Aorta (tissue), 5 donors: ENCODE measurements at regions of chr12 and their contacts with region 1.

Region 1: DNA sequence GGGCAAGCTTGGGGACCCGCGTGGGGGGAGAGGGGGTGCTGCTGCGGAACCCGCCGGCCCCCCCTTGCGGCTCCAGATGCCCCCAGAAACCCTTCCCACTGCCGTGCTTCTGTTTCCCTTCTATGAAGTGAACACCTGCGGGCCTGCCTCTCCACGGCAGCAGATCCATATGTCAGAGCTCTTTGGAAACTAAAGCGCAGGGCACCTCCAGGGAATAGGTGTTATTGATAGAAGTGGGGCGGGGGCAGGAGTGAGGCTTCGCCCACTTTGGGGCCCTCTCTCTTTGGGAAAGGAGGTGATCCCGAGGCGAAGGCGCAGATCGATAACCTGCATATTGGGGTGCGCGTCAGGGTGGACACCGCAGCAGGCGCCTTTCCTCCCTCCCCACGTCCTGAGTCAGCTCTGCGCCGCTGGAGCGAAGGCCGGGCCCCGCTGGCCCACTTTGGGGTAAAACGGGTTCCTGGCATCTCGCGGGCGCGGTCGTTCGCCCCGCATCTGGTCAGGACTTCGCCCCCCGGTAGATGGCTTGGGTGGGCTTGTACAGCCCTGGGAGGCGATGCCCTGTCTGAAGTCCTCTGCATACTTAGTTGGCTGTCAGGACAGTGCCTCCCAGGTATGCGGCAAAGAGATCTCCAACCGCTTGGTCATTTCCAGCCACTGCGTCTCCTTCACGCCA is 524 bp downstream of the KMT5A start:
- DNase-seq: no peak
- ATAC-seq: no peak
- H3K4me3 ChIP-seq: peak overlapping the region; percentile 66
- H3K27ac ChIP-seq: peak overlapping the region in 1 of 2 donors; percentile 34
- H3K4me1 ChIP-seq: no peaks in the 10 kb centered on the region
- H3K27me3 ChIP-seq: no peaks in the 10 kb centered on the region

Region 2: DNA sequence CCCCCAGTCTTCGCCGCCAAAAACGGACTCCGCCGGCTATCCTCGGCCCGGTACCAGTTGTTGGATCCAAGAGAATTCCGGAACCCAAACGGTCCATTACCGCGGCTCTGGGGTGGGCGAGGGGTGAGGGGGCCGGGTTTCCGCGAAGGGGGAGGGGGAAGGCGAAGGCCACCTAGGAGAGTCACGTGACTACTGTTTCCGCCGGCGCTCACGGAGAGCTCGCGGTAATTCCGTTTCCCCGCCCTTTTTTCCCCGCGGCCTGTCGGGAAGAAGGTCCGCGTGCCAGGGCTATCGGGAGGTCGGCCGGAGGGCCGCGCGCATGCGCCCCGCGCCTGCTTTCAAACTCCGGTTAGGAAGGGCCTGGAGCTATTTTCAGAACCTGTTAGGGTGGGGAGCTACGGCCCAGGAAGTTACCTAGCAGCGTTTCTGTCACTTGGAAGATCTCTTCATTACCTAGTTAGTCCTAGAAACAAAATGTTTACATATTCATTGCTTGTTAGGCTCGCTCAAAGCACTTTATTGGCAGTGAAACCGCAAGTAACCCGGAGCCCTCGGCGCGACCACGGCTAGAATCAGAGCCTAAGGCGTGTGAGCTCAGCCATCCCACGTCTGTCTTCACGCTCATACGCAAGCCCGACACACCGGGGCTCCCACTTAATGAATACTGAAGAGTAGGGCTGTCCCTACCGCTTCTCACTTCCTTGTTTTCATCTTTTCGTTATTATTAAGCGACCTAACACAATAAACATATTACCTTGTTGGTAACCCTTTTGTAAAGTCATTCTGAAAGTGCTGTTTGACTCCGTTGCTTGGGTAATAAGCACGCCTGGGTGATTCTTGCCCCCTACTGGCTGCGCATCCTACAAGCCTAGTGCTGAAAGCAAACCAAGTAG is 19.2 kb before region 1 on chr12:
- intact Hi-C with region 1: loop called in 1 of 2 experiments (anchors 2 kb)
- DNase-seq: peak; percentile 99
- ATAC-seq: peak; percentile 97
- H3K4me3 ChIP-seq: peak overlapping the region; percentile 61 to 91
- H3K27ac ChIP-seq: peak overlapping the region; percentile 73 to 95
- H3K4me1 ChIP-seq: no peaks in the 10 kb centered on the region
- H3K27me3 ChIP-seq: no peaks in the 10 kb centered on the region

Region 3: GRCh38 chr12:124599074-124599999 is 1214.9 kb after region 1 on chr12:
- intact Hi-C with region 1: no loop called
- DNase-seq: no peak
- ATAC-seq: no peak
- H3K4me3 ChIP-seq: no peak overlapping the region
- H3K27ac ChIP-seq: no peak overlapping the region
- H3K4me1 ChIP-seq: no peaks in the 10 kb centered on the region
- H3K27me3 ChIP-seq: no peaks in the 10 kb centered on the region